Endothelial cell of umbilical vein (primary cell): ENCODE measurements at regions of chr11 and their contacts with region 1.

Region 1: GRCh38 chr11:130069684-130070108 is at the start of gene APLP2:
- DNase-seq: peak; percentile 98
- H3K4me3 ChIP-seq: peak within 1 kb of the TSS; percentile 56 to 96 (median 92)
- H3K27ac ChIP-seq: peak within 1 kb of the TSS; percentile 82
- H3K4me1 ChIP-seq: peaks cover 12% of the 10 kb centered on the region
- H3K27me3 ChIP-seq: no peaks in the 10 kb centered on the region
- CTCF ChIP-seq: no peak
- POLR2A ChIP-seq: peak; percentile 99
- total RNA-seq, gene APLP2: 503 and 543 TPM in 2 replicates

Region 2: DNA sequence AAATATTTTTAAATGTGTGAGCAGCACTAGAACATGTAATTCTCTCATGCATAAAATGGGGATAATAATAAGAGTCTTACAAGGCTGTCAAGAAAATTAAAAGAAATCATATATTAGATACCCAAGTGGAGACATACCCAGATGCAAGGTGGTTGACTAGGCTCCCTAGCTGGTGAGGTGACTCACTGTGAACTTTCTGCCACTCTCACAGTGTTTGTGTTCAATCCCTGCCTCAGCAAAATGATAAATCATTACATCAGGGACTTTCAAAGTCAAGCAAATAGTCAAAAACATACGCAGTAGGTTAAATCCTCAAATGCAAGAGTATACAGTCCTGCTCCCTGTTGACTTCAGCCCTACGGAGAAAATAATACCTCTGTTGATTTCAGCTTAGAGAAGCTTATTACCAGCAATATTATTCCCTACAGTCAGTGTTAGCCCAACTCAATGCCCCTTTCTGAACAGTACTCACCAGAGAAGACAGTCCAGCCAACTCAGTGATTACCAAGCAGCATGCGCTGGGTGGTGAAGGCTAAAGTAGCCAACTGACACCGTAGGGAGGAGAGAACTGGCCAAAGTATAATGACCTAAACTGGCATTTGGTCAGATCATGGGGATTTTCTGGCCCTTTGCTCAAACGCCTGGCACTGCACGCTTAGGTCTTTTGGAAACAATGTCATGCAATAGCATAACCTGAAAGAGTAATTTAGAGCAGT is 767.2 kb before region 1 on chr11:
- CTCF ChIA-PET with region 1: no interaction called
- POLR2A ChIA-PET with region 1: no interaction called
- dilution Hi-C with region 1: no loop called
- intact Hi-C with region 1: no loop called
- DNase-seq: no peak
- H3K4me3 ChIP-seq: no peak overlapping the region
- H3K27ac ChIP-seq: no peak overlapping the region
- H3K4me1 ChIP-seq: no peaks in the 10 kb centered on the region
- H3K27me3 ChIP-seq: peaks cover 0 to 3% of the 10 kb centered on the region in 2 experiments
- CTCF ChIP-seq: no peak
- POLR2A ChIP-seq: no peak

Region 3: DNA sequence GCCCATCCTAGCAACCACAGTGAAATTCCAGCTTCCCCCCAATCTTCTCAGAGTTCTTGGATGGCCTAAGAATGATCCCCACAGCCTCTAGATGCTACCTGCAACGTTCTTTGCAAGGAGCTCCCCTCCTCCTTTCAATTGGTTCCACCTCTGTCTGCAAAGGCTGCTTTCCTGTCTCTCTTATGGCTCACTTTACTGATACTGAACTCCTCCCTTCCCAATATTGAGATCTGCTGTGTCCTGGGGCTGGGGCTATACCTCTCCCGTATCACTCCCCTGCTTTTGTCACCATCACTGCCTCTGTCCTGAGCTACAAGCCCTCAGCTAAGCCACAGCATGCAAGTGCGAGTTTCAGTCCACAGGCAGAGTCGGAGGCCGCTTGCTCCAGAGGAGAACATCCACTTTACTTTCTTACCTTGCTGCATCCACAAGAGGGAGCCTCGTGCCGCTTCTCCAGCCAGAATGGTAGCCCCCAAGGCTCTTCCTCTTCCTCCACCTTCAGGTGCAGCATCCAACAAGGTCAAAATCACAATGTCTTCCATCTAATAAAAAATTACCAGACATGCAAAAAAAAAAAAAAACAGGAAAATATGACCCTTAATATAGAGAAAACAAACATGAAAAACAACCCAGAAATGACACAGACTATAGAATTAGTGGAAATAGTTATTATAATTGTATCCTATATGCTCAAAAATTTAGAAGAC is 302.6 kb before region 1 on chr11:
- CTCF ChIA-PET with region 1: no interaction called
- POLR2A ChIA-PET with region 1: no interaction called
- dilution Hi-C with region 1: no loop called
- intact Hi-C with region 1: no loop called
- DNase-seq: peak; percentile 26
- H3K4me3 ChIP-seq: no peak overlapping the region
- H3K27ac ChIP-seq: no peak overlapping the region
- H3K4me1 ChIP-seq: no peaks in the 10 kb centered on the region
- H3K27me3 ChIP-seq: no peaks in the 10 kb centered on the region
- CTCF ChIP-seq: peak; percentile 31 to 63
- POLR2A ChIP-seq: no peak

Region 4: DNA sequence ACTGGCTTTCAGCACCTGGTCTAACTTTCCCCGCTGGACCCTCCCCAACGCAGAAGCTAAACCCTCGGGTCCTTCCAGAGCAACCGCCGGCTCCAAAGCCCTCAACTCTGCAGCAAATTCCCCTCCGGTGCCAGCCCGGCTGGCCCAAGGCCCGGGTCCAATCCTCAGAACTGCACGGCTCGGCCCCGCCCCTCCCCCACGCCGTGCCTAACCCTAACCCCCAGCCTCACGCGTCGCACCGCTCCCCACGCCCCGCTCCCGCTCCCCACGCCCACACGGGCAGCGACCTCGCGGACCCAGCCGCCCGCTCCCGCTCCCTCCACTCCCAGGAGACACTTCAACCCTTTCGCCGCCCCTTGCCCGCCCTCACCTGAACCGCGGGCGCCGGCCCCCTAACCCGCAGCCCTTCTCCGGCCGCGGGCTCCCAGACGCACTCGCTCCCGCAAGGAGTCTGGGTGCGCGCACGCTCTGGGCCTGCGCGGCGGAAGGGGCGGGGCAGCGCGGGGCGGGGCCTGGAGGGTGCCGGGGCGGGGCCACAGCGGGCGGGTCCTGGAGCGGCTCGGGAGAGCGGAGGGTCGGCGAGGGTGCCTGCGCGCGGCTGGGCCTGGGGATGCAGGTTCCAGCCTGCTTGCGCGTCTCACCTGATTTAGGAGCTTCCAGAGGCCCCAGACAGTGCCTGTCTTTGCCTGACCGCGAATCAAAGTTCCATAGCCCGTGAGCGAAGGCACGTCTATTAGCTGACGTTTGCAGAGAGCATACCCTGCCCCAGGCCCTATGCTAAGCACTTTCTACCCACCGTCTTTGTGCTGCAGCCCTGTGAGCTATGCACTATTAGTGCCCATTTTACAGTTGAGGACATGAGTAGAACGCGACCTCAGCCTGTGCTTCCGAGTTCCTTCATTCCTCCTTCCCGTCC is 174.3 kb before region 1 on chr11 and contains the start of gene NFRKB:
- CTCF ChIA-PET with region 1: no interaction called
- POLR2A ChIA-PET with region 1: interaction called, 4 read pairs
- dilution Hi-C with region 1: no loop called
- intact Hi-C with region 1: loop called (anchors 1 kb)
- DNase-seq: peak; percentile 84
- H3K4me3 ChIP-seq: peak within 1 kb of the TSS; percentile 72 to 95 (median 93)
- H3K27ac ChIP-seq: no peak within 1 kb of the TSS
- H3K4me1 ChIP-seq: peaks cover 9% of the 10 kb centered on the region
- H3K27me3 ChIP-seq: no peaks in the 10 kb centered on the region
- CTCF ChIP-seq: no peak
- POLR2A ChIP-seq: peak; percentile 83
- total RNA-seq, gene NFRKB: 30.1 and 30.6 TPM in 2 replicates

Region 5: GRCh38 chr11:129950101-129951091 is 119.3 kb before region 1 on chr11:
- CTCF ChIA-PET with region 1: no interaction called
- POLR2A ChIA-PET with region 1: no interaction called
- dilution Hi-C with region 1: no loop called
- intact Hi-C with region 1: loop called (anchors 1 kb)
- DNase-seq: peak; percentile 77
- H3K4me3 ChIP-seq: peak overlapping the region in 1 of 3 experiments; percentile 25
- H3K27ac ChIP-seq: peak overlapping the region; percentile 54
- H3K4me1 ChIP-seq: peaks cover 19% of the 10 kb centered on the region
- H3K27me3 ChIP-seq: no peaks in the 10 kb centered on the region
- CTCF ChIP-seq: no peak
- POLR2A ChIP-seq: no peak

Region 6: GRCh38 chr11:130042093-130042591 is 27.6 kb before region 1 on chr11:
- CTCF ChIA-PET with region 1: no interaction called
- POLR2A ChIA-PET with region 1: interaction called, 7 read pairs
- dilution Hi-C with region 1: no loop called
- intact Hi-C with region 1: loop called (anchors 1 kb)
- DNase-seq: peak; percentile 95
- H3K4me3 ChIP-seq: no peak overlapping the region
- H3K27ac ChIP-seq: peak overlapping the region; percentile 88
- H3K4me1 ChIP-seq: peaks cover 17% of the 10 kb centered on the region
- H3K27me3 ChIP-seq: no peaks in the 10 kb centered on the region
- CTCF ChIP-seq: no peak
- POLR2A ChIP-seq: no peak

Region 7: DNA sequence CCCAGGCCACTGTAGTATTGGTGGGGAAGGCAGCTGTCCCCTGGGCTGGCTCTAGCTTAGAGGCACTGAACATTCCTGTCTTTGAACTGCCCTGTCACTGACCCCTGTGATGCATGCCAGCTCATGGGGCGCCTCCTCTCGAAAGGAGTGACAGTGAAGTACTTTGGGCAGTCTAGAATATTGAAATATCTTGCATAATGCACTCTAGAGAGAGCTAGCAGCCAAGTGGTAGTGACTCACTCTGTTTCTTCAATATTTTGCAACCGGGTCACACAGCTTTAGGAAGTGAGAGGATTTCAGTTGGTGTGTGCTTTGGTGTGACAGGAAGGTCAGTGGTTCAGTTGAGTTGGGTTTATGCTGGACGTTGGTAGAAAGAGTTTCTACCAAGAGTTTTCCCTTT is 54.4 kb after region 1 on chr11:
- CTCF ChIA-PET with region 1: interaction called, 9 read pairs
- POLR2A ChIA-PET with region 1: interaction called, 8 read pairs
- dilution Hi-C with region 1: no loop called
- intact Hi-C with region 1: loop called (anchors 1 kb)
- DNase-seq: peak; percentile 72
- H3K4me3 ChIP-seq: no peak overlapping the region
- H3K27ac ChIP-seq: peak overlapping the region; percentile 60
- H3K4me1 ChIP-seq: peaks cover 54% of the 10 kb centered on the region
- H3K27me3 ChIP-seq: no peaks in the 10 kb centered on the region
- CTCF ChIP-seq: no peak
- POLR2A ChIP-seq: no peak